ENCODE measurements at regions of chr6 and their contacts with region 1.

Region 1: DNA sequence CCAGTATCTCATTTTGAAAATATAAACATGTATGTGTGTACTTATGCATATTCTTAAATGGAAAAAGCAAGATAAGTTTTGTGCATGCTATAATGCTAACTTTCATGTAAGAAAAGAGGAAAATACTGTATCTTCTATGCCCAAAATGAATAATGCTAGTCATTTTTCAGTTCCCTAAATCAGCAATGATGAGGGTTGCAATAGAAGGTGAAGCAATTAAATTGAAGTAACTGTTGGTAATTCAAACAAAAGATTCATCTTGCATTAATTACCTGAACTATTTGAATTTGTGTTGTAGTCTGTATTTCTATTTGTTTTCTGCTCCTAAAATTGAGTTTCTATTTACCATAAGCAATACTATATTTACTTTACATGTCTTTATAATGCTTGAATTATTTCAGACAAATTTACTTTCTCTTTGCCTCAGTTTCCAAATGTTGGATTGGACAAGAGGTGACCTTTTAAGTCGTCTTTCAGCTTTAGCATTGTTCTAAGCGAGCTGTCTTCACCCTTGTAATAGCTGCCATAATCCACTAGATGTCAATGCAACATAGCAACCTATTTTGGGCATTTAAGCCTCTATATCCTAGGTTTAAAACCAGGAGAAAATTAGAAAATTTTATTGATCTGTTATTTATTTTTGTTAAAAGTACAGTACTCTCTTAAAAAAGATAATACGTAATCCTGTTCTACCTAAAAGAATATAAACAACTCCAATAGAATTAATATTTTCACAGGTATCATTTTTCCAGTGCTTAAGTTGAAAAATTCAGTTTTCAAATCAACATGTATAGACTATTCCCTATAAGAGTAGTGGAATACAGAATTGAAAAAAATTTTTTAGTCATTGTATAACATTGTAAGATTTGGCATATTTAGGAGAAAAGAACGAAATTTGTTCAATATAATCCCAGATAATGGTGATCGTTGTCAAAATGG is 52.3 kb upstream of the IFNGR1 start:
- DNase-seq: peak in 1 of 2 donors; percentile 67
- ATAC-seq: peak; percentile 68 to 78 (median 69)
- H3K4me3 ChIP-seq: no peak overlapping the region
- H3K4me3 Mint-ChIP-seq: no peak overlapping the region
- H3K27ac ChIP-seq: no peak overlapping the region
- H3K27ac Mint-ChIP-seq: peak overlapping the region in 1 of 2 donors; percentile 34
- H3K4me1 ChIP-seq: peaks cover 12% of the 10 kb centered on the region
- H3K4me1 Mint-ChIP-seq: peaks cover 21 to 34% of the 10 kb centered on the region in 2 donors
- H3K27me3 ChIP-seq: no peaks in the 10 kb centered on the region
- H3K27me3 Mint-ChIP-seq: no peaks in the 10 kb centered on the region
- CTCF ChIP-seq: peak; percentile 91

Region 2: DNA sequence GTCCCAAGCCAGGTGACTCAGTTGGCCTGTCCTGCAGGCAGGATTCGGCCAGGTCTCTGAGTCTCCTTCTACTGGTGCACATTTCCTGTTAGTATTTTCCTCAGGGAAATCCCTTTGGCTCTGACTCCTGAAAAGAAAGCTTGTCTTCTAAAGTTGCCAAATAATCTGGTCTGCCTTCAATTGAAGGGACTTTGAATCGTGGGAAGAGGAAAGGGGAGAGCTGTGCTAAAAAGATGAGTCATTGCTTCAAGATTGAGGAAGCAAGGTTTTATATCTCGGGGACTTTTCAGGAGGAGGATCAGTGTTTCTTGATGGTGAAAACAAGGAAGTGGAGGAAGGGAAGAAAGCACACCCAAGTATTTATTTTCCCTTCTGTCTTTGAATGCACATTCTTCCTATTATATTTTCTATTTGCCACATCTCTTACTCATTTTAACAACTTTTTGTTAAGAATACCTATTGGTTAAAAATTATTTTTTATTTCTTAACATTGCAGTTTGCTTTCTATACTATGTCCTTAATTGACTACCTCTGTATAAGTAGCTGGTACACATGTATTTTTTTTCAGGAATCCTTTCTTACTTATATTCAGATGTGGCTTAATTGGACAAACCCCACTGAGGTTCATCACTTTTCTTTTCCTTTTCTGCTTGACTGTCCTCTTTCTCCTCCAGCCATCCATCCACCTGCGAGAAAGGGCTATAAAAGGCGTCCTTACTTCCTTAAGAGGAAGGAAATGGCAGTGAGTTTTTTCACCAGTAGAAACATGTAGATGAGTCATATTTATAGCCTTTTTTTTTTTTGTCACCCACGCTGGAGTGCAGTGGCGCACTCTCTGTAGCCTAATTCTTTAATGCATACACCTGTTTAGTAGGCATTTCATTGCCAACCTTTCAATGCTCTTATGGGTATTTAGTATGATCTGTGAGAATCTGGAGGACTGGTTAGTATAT is 37.3 kb before region 1 on chr6:
- intact Hi-C with region 1: loop called (anchors 2 kb)
- DNase-seq: peak in 1 of 2 donors; percentile 72
- ATAC-seq: peak; percentile 67 to 77 (median 75)
- H3K4me3 ChIP-seq: no peak overlapping the region
- H3K4me3 Mint-ChIP-seq: peak overlapping the region; percentile 77
- H3K27ac ChIP-seq: peak overlapping the region; percentile 50
- H3K27ac Mint-ChIP-seq: peak overlapping the region; percentile 79 to 88
- H3K4me1 ChIP-seq: peaks cover 51% of the 10 kb centered on the region
- H3K4me1 Mint-ChIP-seq: peaks cover 64 to 72% of the 10 kb centered on the region in 2 donors
- H3K27me3 ChIP-seq: no peaks in the 10 kb centered on the region
- H3K27me3 Mint-ChIP-seq: no peaks in the 10 kb centered on the region
- CTCF ChIP-seq: no peak

Region 3: GRCh38 chr6:137248702-137249101 is 22.8 kb before region 1 on chr6:
- intact Hi-C with region 1: no loop called
- DNase-seq: no peak
- ATAC-seq: peak in 1 of 3 donors; percentile 55
- H3K4me3 ChIP-seq: no peak overlapping the region
- H3K4me3 Mint-ChIP-seq: no peak overlapping the region
- H3K27ac ChIP-seq: no peak overlapping the region
- H3K27ac Mint-ChIP-seq: no peak overlapping the region
- H3K4me1 ChIP-seq: no peaks in the 10 kb centered on the region
- H3K4me1 Mint-ChIP-seq: peaks cover 0 to 5% of the 10 kb centered on the region in 2 donors
- H3K27me3 ChIP-seq: no peaks in the 10 kb centered on the region
- H3K27me3 Mint-ChIP-seq: no peaks in the 10 kb centered on the region
- CTCF ChIP-seq: no peak

Region 4: GRCh38 chr6:137313928-137314855 is 42.7 kb after region 1 on chr6:
- intact Hi-C with region 1: loop called (anchors 5 kb)
- DNase-seq: peak; percentile 44 to 87
- ATAC-seq: peak; percentile 81 to 88 (median 81)
- H3K4me3 ChIP-seq: no peak overlapping the region
- H3K4me3 Mint-ChIP-seq: no peak overlapping the region
- H3K27ac ChIP-seq: no peak overlapping the region
- H3K27ac Mint-ChIP-seq: no peak overlapping the region
- H3K4me1 ChIP-seq: peaks cover 9% of the 10 kb centered on the region
- H3K4me1 Mint-ChIP-seq: peaks cover 6 to 9% of the 10 kb centered on the region in 2 donors
- H3K27me3 ChIP-seq: no peaks in the 10 kb centered on the region
- H3K27me3 Mint-ChIP-seq: peaks cover 0 to 4% of the 10 kb centered on the region in 2 donors
- CTCF ChIP-seq: peak; percentile 82

Region 5: DNA sequence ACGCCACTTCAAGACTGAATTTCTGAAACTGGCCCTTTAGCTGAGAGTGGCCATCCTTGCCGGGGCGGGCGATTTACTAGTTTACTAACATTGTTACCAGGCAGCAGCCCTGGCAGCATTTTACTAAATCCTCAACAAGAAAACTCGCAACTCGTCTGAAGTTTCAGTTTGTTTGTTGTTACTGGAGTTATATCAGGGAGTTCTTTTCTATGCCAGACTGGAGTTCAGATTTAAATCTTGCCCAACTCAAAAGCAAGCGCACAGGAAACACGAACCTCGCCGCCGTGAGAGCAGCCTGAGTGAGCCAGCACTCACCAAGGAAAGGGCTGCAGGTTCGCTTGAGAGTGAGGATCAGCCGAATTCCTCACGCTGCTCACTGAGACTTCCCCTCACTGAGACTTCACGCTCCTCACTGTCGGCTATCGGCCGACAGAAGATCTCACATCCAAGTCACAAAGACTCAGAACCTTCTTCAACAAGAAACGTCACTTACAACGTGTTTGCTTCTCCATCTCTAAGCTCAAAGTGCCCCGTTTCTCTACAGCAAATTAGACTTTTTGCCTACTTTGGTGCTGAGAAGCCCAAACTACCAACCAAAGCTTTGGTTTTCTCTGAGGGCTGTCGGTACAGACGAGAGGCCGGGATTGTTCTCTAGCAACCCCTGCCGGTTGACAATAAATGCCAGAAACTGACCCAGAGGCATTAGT is 143.8 kb after region 1 on chr6:
- intact Hi-C with region 1: loop called (anchors 1 kb)
- DNase-seq: peak; percentile 50 to 85
- ATAC-seq: peak; percentile 90 to 93 (median 91)
- H3K4me3 ChIP-seq: peak overlapping the region; percentile 41
- H3K4me3 Mint-ChIP-seq: peak overlapping the region; percentile 93
- H3K27ac ChIP-seq: peak overlapping the region; percentile 87
- H3K27ac Mint-ChIP-seq: peak overlapping the region; percentile 94 to 98
- H3K4me1 ChIP-seq: peaks cover 16% of the 10 kb centered on the region
- H3K4me1 Mint-ChIP-seq: peaks cover 20 to 21% of the 10 kb centered on the region in 2 donors
- H3K27me3 ChIP-seq: no peaks in the 10 kb centered on the region
- H3K27me3 Mint-ChIP-seq: no peaks in the 10 kb centered on the region
- CTCF ChIP-seq: peak; percentile 74

Region 6: DNA sequence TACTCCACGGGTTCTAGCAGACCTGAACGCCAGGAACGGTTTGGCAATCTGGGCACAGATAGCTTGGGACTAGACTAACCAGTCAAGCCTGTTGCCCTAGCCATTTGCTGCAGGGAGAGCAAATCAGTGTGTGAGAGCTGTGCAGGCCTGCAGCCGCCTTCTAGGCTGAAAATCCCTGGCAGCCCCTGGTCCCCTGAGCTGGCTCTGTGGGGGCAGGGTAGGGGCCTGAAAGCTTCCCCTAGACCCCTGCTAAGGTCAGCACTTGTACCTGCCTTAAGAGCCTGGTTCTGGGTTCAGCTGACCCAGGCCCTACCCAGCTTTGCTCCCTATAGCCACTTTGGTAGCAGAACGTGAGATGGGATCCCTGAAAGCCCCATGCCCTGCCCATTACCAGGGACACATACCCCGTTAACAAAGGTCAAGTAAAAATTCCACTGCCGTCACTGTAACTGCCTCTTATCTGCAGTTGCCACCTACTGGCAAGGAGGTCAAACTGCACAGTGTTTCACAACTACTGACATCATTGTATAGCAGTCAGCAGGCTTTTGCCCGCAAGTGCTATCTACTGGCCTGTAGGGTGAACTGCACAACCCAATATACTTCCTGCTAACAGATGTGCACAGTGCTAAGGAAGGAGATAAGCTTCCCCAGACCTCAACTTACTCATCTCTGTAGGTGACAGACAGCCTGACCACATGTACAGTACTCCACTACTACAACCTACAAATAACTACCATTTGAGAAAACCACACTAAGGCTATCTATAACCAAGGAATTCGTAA is 317.7 kb after region 1 on chr6:
- intact Hi-C with region 1: loop called (anchors 5 kb)
- DNase-seq: peak; percentile 30 to 81
- ATAC-seq: peak; percentile 98 to 99 (median 98)
- H3K4me3 ChIP-seq: no peak overlapping the region
- H3K4me3 Mint-ChIP-seq: peak overlapping the region; percentile 35
- H3K27ac ChIP-seq: no peak overlapping the region
- H3K27ac Mint-ChIP-seq: peak overlapping the region; percentile 50 to 53
- H3K4me1 ChIP-seq: peaks cover 15% of the 10 kb centered on the region
- H3K4me1 Mint-ChIP-seq: peaks cover 18 to 22% of the 10 kb centered on the region in 2 donors
- H3K27me3 ChIP-seq: peaks cover 5% of the 10 kb centered on the region
- H3K27me3 Mint-ChIP-seq: peaks cover 38 to 51% of the 10 kb centered on the region in 2 donors
- CTCF ChIP-seq: peak; percentile 76

Region 7: GRCh38 chr6:137641474-137642077 is 370.1 kb after region 1 on chr6:
- intact Hi-C with region 1: loop called (anchors 1 kb)
- DNase-seq: peak; percentile 47 to 85
- ATAC-seq: peak; percentile 82 to 95 (median 92)
- H3K4me3 ChIP-seq: no peak overlapping the region
- H3K4me3 Mint-ChIP-seq: no peak overlapping the region
- H3K27ac ChIP-seq: no peak overlapping the region
- H3K27ac Mint-ChIP-seq: no peak overlapping the region
- H3K4me1 ChIP-seq: peaks cover 2% of the 10 kb centered on the region
- H3K4me1 Mint-ChIP-seq: peaks cover 0 to 5% of the 10 kb centered on the region in 2 donors
- H3K27me3 ChIP-seq: no peaks in the 10 kb centered on the region
- H3K27me3 Mint-ChIP-seq: peaks cover 8 to 31% of the 10 kb centered on the region in 2 donors
- CTCF ChIP-seq: peak; percentile 86